ENCODE measurements at regions of chr2 and their contacts with region 1.

Region 1: GRCh38 chr2:116238511-116238910 is 1576.0 kb upstream of the DDX18 start:
- DNase-seq: no peak
- ATAC-seq: no peak
- H3K4me3 ChIP-seq: no peak overlapping the region
- H3K27ac ChIP-seq: no peak overlapping the region
- H3K4me1 ChIP-seq: no peaks in the 10 kb centered on the region
- H3K27me3 ChIP-seq: no peaks in the 10 kb centered on the region
- CTCF ChIP-seq: no peak

Region 2: GRCh38 chr2:116180072-116180471 is 58.4 kb before region 1 on chr2:
- CTCF ChIA-PET with region 1: no interaction called
- POLR2A ChIA-PET with region 1: no interaction called
- in situ Hi-C with region 1: no loop called
- intact Hi-C with region 1: no loop called
- DNase-seq: no peak
- ATAC-seq: no peak
- H3K4me3 ChIP-seq: no peak overlapping the region
- H3K27ac ChIP-seq: no peak overlapping the region
- H3K4me1 ChIP-seq: no peaks in the 10 kb centered on the region
- H3K27me3 ChIP-seq: no peaks in the 10 kb centered on the region
- CTCF ChIP-seq: no peak

Region 3: GRCh38 chr2:116269040-116269439 is 30.5 kb after region 1 on chr2:
- CTCF ChIA-PET with region 1: interaction called, 11 read pairs
- POLR2A ChIA-PET with region 1: no interaction called
- in situ Hi-C with region 1: no loop called
- intact Hi-C with region 1: no loop called
- DNase-seq: no peak
- ATAC-seq: no peak
- H3K4me3 ChIP-seq: no peak overlapping the region
- H3K27ac ChIP-seq: no peak overlapping the region
- H3K4me1 ChIP-seq: no peaks in the 10 kb centered on the region
- H3K27me3 ChIP-seq: no peaks in the 10 kb centered on the region
- CTCF ChIP-seq: no peak

Region 4: GRCh38 chr2:116924509-116924908 is 686.0 kb after region 1 on chr2:
- CTCF ChIA-PET with region 1: no interaction called
- POLR2A ChIA-PET with region 1: no interaction called
- in situ Hi-C with region 1: no loop called
- intact Hi-C with region 1: no loop called
- DNase-seq: no peak
- ATAC-seq: no peak
- H3K4me3 ChIP-seq: no peak overlapping the region
- H3K27ac ChIP-seq: no peak overlapping the region
- H3K4me1 ChIP-seq: no peaks in the 10 kb centered on the region
- H3K27me3 ChIP-seq: no peaks in the 10 kb centered on the region
- CTCF ChIP-seq: no peak